Mammary epithelial cell (primary cell): ENCODE measurements at regions of chr1 and their contacts with region 1.

Region 1: GRCh38 chr1:28965271-28965870 is 51.0 kb downstream of the EPB41 start:
- DNase-seq: peak; percentile 39
- H3K4me3 ChIP-seq: no peak overlapping the region
- H3K27ac ChIP-seq: no peak overlapping the region
- H3K4me1 ChIP-seq: peaks cover 8% of the 10 kb centered on the region
- H3K27me3 ChIP-seq: no peaks in the 10 kb centered on the region
- CTCF ChIP-seq: no peak

Region 2: DNA sequence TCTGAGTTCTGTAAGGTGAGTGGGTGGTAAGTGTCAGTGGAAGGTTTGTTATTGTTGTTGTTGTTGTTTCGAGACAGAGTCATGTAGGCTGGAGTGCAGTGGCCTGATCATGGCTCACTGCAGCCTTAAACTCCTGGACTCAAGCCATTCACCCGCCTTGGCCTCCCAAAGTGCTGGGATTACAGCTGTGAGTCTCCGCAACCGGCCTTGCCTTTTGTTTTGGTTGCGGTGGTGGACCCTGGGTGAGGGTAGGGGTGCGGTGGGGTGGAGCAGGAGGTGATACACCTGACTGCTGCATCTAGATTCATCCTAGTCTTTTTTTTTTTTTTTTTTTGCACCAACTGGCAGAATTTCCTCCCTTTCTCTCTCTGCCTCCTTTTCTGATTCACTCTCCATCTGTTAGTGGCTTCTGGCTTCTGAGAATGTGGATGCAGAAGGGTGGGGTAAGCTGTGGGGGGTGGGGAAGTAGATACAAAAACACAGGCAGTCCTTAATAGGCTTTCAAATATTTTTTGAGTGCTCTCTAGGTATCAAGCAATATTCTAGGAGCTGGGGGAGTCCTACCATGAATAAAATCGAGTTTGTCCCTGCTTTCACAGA is 301.4 kb before region 1 on chr1:
- CTCF ChIA-PET with region 1: no interaction called
- dilution Hi-C with region 1: no loop called
- in situ Hi-C with region 1: no loop called
- intact Hi-C with region 1: no loop called
- DNase-seq: no peak
- H3K4me3 ChIP-seq: no peak overlapping the region
- H3K27ac ChIP-seq: no peak overlapping the region
- H3K4me1 ChIP-seq: peaks cover 6% of the 10 kb centered on the region
- H3K27me3 ChIP-seq: no peaks in the 10 kb centered on the region
- CTCF ChIP-seq: no peak

Region 3: DNA sequence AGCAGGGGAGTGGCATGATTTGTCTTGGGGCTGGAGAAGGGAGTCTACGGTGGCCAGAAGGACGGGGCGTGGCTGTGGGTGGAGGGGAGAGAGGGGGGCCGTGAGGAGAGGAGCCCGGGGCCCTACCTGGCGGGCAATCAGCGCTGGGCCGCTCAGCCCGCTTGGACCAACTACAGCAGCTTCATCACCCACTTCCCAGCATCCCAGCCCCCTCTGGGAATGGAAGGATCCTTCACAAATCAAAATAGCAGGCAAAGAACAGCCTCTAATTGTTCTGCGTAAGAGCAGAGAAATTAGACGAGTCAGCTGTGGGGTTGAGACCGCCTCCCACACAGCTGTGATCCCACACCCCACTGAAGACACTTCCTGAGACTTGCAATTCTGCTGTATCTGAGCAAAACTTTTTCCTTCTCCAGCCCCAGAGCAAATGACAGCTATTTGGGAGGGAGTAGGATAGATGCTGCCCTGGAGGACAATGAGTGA is 109.9 kb before region 1 on chr1:
- CTCF ChIA-PET with region 1: no interaction called
- dilution Hi-C with region 1: no loop called
- in situ Hi-C with region 1: no loop called
- intact Hi-C with region 1: no loop called
- DNase-seq: no peak
- H3K4me3 ChIP-seq: no peak overlapping the region
- H3K27ac ChIP-seq: no peak overlapping the region
- H3K4me1 ChIP-seq: no peaks in the 10 kb centered on the region
- H3K27me3 ChIP-seq: peaks cover 3% of the 10 kb centered on the region
- CTCF ChIP-seq: no peak

Region 4: GRCh38 chr1:29011775-29012174 is 46.4 kb after region 1 on chr1:
- CTCF ChIA-PET with region 1: no interaction called
- dilution Hi-C with region 1: no loop called
- in situ Hi-C with region 1: no loop called
- intact Hi-C with region 1: no loop called
- DNase-seq: no peak
- H3K4me3 ChIP-seq: no peak overlapping the region
- H3K27ac ChIP-seq: no peak overlapping the region
- H3K4me1 ChIP-seq: no peaks in the 10 kb centered on the region
- H3K27me3 ChIP-seq: no peaks in the 10 kb centered on the region
- CTCF ChIP-seq: no peak

Region 5: DNA sequence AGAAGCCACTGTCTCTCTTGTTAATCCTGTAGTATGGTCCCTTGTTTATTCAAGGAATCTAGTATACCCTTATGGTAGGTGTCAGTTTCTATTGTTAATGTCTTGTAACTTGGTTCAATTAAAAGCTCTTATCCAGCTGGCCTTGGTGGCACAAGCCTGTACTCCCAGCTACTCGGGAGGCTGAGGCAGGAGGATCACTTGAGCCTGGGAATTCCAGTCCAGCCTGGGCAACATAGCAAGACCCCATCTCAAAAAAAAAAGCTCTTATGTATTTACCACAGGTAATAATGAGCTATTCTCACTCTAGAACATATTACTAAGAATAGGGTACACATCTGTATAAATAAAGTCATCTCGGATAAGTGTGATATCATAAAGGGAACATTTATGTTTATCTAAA is 111.8 kb after region 1 on chr1:
- CTCF ChIA-PET with region 1: interaction called, 24 read pairs
- dilution Hi-C with region 1: no loop called
- in situ Hi-C with region 1: no loop called
- intact Hi-C with region 1: no loop called
- DNase-seq: no peak
- H3K4me3 ChIP-seq: no peak overlapping the region
- H3K27ac ChIP-seq: no peak overlapping the region
- H3K4me1 ChIP-seq: no peaks in the 10 kb centered on the region
- H3K27me3 ChIP-seq: no peaks in the 10 kb centered on the region
- CTCF ChIP-seq: no peak

Region 6: GRCh38 chr1:29450591-29450990 is 485.2 kb after region 1 on chr1:
- CTCF ChIA-PET with region 1: no interaction called
- dilution Hi-C with region 1: no loop called
- in situ Hi-C with region 1: no loop called
- intact Hi-C with region 1: no loop called
- DNase-seq: no peak
- H3K4me3 ChIP-seq: no peak overlapping the region
- H3K27ac ChIP-seq: no peak overlapping the region
- H3K4me1 ChIP-seq: no peaks in the 10 kb centered on the region
- H3K27me3 ChIP-seq: no peaks in the 10 kb centered on the region
- CTCF ChIP-seq: no peak